Activated T-helper 1 cell treated with anti-CD3 and anti-CD28 coated beads, Interleukin-12 subunit alpha, Interleukin-12 subunit beta, Interleukin-2, Interleukin-4 antibody, amounts not matched to agents 30 ng/mL and 10 ng/mL and 1 ng/mL, durations not matched to agents 14 hours and 24 hours and 36 hours (primary cell): ENCODE measurements at regions of chr9 and their contacts with region 1.

Region 1: GRCh38 chr9:137138722-137139467 is at the start of gene GRIN1:
- DNase-seq: peak; percentile 40
- H3K4me3 Mint-ChIP-seq: no peak within 1 kb of the TSS
- H3K27ac Mint-ChIP-seq: no peak within 1 kb of the TSS
- H3K4me1 Mint-ChIP-seq: no peaks in the 10 kb centered on the region
- H3K27me3 Mint-ChIP-seq: peaks cover 38% of the 10 kb centered on the region
- total RNA-seq, gene GRIN1: 0.05 TPM in 2 replicates

Region 2: DNA sequence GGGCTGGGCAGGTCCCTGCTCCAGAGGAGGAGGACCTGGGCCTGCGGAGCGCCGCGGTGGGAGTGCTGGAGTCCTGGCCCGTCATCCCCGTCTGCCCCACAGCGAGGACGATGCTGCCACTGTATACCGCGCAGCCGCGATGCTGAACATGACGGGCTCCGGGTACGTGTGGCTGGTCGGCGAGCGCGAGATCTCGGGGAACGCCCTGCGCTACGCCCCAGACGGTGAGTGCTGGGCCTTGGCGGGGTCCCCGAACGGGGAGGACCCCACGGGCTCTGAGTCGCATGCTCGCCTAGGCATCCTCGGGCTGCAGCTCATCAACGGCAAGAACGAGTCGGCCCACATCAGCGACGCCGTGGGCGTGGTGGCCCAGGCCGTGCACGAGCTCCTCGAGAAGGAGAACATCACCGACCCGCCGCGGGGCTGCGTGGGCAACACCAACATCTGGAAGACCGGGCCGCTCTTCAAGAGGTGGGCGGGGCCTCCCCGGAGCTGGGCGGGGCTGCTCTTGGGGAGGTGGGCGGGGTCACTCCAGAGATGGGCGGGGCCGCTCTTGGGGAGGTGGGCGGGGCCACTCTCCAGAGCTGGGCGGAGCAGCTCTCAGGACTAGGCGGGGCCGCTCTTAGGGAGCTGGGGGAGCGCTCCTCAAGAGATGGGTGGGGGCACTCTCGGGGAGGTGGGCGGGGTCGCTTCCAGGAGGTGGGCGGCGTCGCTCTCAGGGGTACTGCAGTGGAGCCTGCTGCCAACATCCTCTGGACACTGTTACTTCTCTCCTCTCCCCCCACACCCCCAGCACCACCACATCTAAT is 17.9 kb after region 1 on chr9:
- intact Hi-C with region 1: loop called (anchors 2 kb)
- DNase-seq: peak; percentile 43
- H3K4me3 Mint-ChIP-seq: peak overlapping the region; percentile 21
- H3K27ac Mint-ChIP-seq: no peak overlapping the region
- H3K4me1 Mint-ChIP-seq: no peaks in the 10 kb centered on the region
- H3K27me3 Mint-ChIP-seq: peaks cover 26% of the 10 kb centered on the region

Region 3: GRCh38 chr9:137168905-137169856 is 30.3 kb after region 1 on chr9:
- intact Hi-C with region 1: loop called (anchors 2 kb)
- DNase-seq: no peak
- H3K4me3 Mint-ChIP-seq: no peak overlapping the region
- H3K27ac Mint-ChIP-seq: no peak overlapping the region
- H3K4me1 Mint-ChIP-seq: no peaks in the 10 kb centered on the region
- H3K27me3 Mint-ChIP-seq: peaks cover 30% of the 10 kb centered on the region